H1 (cell line): ENCODE measurements at regions of chr1 and their contacts with region 1.

Region 1: DNA sequence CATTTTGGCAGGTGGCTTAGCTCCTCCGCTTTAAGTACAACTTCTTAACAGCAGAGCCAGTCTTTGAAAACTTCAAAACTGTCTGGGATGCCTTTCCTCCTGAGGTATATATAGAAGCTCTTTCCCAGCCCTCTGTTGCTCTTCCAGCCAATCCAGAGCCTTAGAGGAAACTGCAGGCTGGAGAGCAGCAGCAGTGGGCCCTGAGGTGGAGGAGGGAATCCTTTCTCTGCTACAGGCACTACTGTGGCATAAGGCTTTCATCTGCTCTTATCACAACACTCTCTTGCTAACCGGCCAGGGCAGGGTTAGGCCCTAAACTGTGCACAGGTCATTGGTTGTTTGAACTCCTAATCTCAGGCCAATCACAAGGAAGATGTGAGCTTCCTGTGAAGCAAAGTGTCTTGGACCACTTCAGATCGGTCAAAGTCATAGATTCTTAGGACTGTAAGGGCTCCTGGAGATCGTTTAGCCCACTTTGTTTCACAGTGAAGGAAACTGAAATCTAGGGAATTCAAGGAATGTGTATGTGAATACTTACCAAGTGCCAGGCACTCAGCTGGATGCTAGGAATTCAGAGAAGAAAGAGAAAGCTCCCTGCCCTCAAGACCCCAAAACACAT is at the start of gene RGS5:
- DNase-seq: peak; percentile 49 to 61
- H3K4me3 ChIP-seq: peak within 1 kb of the TSS in 2 of 4 experiments; percentile 7 to 54; a peak in 5 of 8 replicates
- H3K27ac ChIP-seq: peak within 1 kb of the TSS; percentile 86
- H3K4me1 ChIP-seq: peaks cover 0 to 8% (median 3%) of the 10 kb centered on the region in 4 experiments; a peak in 4 of 7 replicates
- H3K27me3 ChIP-seq: no peaks in the 10 kb centered on the region
- CTCF ChIP-seq: no peak
- EP300 ChIP-seq: peak in 1 of 2 experiments; percentile 82; a peak in 1 of 3 replicates
- POLR2A ChIP-seq: peak in 1 of 2 experiments; percentile 30; a peak in 1 of 3 replicates
- RAD21 ChIP-seq: 0 out of 4 replicates have a peak, but pooled peaks of 1 of the 2 experiments have one; percentile 2
- total RNA-seq, gene RGS5: 96.3 and 103 TPM in 2 replicates

Region 2: GRCh38 chr1:163054181-163054591 is 148.8 kb before region 1 on chr1:
- CTCF ChIA-PET with region 1: no interaction called
- POLR2A ChIA-PET with region 1: no interaction called
- DNase-seq: no peak
- H3K4me3 ChIP-seq: no peak overlapping the region
- H3K27ac ChIP-seq: no peak overlapping the region
- H3K4me1 ChIP-seq: no peaks in the 10 kb centered on the region
- H3K27me3 ChIP-seq: no peaks in the 10 kb centered on the region
- CTCF ChIP-seq: no peak
- EP300 ChIP-seq: no peak
- POLR2A ChIP-seq: no peak
- RAD21 ChIP-seq: no peak

Region 3: GRCh38 chr1:163267962-163268361 is 65.0 kb after region 1 on chr1:
- CTCF ChIA-PET with region 1: no interaction called
- POLR2A ChIA-PET with region 1: no interaction called
- DNase-seq: no peak
- H3K4me3 ChIP-seq: no peak overlapping the region
- H3K27ac ChIP-seq: no peak overlapping the region
- H3K4me1 ChIP-seq: peaks cover 0 to 1% (median 0%) of the 10 kb centered on the region in 4 experiments; a peak in 1 of 7 replicates
- H3K27me3 ChIP-seq: no peaks in the 10 kb centered on the region
- CTCF ChIP-seq: no peak
- EP300 ChIP-seq: no peak
- POLR2A ChIP-seq: no peak
- RAD21 ChIP-seq: no peak

Region 4: GRCh38 chr1:163321311-163322305 is 118.7 kb after region 1 on chr1 and contains the start of gene NUF2:
- CTCF ChIA-PET with region 1: no interaction called
- POLR2A ChIA-PET with region 1: interaction called, 11 read pairs
- DNase-seq: peak; percentile 98
- H3K4me3 ChIP-seq: peak within 1 kb of the TSS; percentile 79 to 95 (median 92)
- H3K27ac ChIP-seq: peak within 1 kb of the TSS; percentile 68
- H3K4me1 ChIP-seq: peaks cover 0 to 1% (median 0%) of the 10 kb centered on the region in 4 experiments; a peak in 1 of 7 replicates
- H3K27me3 ChIP-seq: no peaks in the 10 kb centered on the region
- CTCF ChIP-seq: no peak
- EP300 ChIP-seq: peak in 1 of 2 experiments; percentile 88; a peak in 1 of 3 replicates
- POLR2A ChIP-seq: peak; percentile 60 to 61
- RAD21 ChIP-seq: peak in 1 of 2 experiments; percentile 5; a peak in 1 of 4 replicates
- total RNA-seq, gene NUF2: 24.1 and 28.3 TPM in 2 replicates